ENCODE measurements at regions of chr5 and their contacts with region 1.

Region 1: GRCh38 chr5:172106511-172107356 is 81.3 kb downstream of the STK10 start:
- DNase-seq: peak in 1 of 2 donors; percentile 90
- ATAC-seq: no peak
- H3K4me3 ChIP-seq: no peak overlapping the region
- H3K27ac ChIP-seq: no peak overlapping the region
- H3K4me1 ChIP-seq: no peaks in the 10 kb centered on the region
- H3K27me3 ChIP-seq: no peaks in the 10 kb centered on the region

Region 2: DNA sequence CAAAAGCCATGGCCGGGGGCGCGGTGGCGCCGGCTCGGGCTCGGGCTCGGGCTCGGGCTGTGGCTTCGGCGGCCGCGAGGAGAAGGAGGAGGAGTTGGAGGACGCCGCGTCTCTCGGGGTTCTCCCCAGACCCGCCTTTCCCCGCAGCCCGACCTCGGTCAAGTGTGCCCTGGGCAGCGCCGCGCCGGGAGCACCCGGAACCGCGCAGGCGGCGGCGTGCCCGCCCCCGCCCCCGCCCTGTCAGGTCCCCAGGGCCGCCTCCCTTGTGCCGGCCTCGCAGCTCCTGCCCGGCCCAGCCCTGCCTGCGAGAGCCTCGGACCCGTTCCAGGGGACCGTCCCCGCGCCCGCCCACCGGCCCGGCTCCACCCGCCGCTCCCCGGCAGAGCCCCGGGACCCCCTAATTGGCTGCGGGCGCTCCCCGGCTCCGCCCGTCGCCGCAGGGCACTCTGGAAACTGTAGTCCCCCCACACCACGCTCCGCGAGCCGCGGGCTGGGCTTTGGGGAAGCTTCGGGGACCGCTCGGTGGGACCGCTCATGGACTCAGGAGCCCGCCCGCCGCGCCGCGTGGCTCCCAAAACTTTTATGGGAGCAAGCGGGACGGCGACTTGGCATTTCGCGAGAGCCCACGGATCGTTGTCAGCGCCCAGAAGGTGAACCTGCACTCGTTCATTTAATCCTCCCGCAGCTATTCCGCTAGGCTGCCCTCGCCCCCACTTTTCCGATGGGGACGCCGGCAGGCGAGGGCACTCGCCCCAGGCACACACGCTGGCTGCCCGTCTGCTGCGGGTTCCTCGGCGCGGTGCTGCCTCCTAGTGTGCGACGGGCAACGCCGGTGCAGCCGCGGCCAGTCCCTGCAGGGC is 81.5 kb after region 1 on chr5 and contains the start of gene STK10:
- intact Hi-C with region 1: loop called (anchors 2 to 5 kb)
- DNase-seq: peak; percentile 97 to 98
- ATAC-seq: peak; percentile 97
- H3K4me3 ChIP-seq: peak within 1 kb of the TSS; percentile 43 to 64
- H3K27ac ChIP-seq: peak within 1 kb of the TSS in 1 of 2 donors; percentile 14
- H3K4me1 ChIP-seq: no peaks in the 10 kb centered on the region
- H3K27me3 ChIP-seq: no peaks in the 10 kb centered on the region
- total RNA-seq, gene STK10: 32.5 to 67.7 TPM

Region 3: DNA sequence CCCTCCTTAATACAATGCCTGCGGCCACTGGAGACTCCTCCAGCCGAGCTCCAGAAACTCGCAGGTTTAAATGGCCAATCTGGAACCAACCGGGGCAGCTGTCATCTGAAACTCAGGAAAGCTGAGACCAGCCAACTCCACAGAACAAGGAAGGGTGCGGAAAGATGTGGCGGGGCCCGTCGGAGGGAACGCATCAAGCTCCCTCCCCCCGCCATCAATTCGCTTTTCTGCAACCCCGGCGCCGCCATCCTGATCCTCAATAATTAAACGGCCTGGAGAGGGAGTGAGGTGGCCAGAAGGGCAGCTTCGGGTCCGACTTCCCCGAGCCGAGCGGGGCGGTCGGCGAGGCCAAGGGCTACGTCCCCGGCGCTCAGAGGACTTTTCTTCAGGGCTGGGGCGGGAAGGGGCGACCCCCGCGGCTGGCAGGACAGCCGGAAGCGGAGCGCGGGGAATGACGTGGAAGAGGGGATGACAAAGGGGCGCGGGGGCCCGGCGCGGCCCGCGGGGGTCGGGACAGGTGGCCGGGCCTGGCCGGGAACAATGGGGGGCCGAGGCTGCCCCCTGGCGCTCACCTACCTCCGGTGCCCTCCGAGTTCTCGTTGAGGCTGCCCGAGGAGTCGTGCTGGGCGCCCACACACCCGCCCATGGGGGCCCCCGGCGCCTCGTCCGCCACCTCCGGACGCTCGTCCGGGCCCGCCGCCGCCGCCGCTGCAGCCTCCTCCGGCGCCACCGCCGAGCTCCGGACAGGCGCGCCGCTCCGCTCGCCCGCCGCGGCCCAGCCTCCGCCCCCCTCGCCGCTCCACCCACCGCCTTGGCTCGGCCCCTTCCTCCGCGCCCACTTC is 176.5 kb after region 1 on chr5 and contains the start of gene UBTD2:
- intact Hi-C with region 1: loop called in 1 of 2 experiments (anchors 5 kb)
- DNase-seq: peak; percentile 92 to 94
- ATAC-seq: peak; percentile 89
- H3K4me3 ChIP-seq: peak within 1 kb of the TSS; percentile 91 to 93
- H3K27ac ChIP-seq: peak within 1 kb of the TSS; percentile 72 to 93
- H3K4me1 ChIP-seq: no peaks in the 10 kb centered on the region
- H3K27me3 ChIP-seq: no peaks in the 10 kb centered on the region
- total RNA-seq, gene UBTD2: 17.0 to 21.1 TPM

Region 4: DNA sequence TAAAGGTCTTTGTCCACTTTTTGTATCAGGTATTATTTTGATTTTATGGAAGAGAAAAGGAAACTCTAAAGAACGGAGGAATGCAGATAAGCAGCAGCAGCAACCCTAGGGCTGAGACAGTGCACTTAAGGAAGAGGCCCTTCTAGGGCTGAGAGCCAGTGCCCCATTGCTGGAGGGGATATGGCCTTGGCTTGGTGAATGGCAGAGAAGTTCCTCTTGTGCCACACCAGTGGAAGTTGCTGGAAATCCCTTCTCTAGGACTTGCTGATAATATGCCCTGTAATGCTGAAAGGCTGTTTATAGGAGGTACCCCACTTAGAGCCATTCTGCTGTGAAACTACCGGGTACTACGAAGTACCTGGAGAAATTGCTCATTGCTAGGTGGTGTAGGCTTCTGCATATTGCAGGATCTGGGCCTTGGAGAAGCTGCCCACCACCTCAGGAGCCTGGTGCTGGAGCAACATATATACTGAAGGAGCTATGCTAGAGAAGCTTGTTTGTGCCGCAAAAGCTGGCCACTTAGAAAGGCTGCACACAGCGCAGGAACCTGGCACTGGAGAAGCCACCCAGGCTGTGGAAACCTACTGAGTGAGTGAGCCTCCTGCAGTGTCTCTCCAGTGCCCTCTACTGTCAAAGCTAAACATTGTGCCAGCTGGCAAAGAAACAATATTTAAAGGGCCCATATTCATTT is 186.5 kb after region 1 on chr5:
- intact Hi-C with region 1: loop called in 1 of 2 experiments (anchors 5 kb)
- DNase-seq: peak in 1 of 2 donors; percentile 72
- ATAC-seq: peak; percentile 85
- H3K4me3 ChIP-seq: no peak overlapping the region
- H3K27ac ChIP-seq: no peak overlapping the region
- H3K4me1 ChIP-seq: no peaks in the 10 kb centered on the region
- H3K27me3 ChIP-seq: peaks cover 0 to 2% of the 10 kb centered on the region in 2 donors

Region 5: GRCh38 chr5:172370648-172371545 is 264.2 kb after region 1 on chr5:
- intact Hi-C with region 1: loop called in 1 of 2 experiments (anchors 5 kb)
- DNase-seq: no peak
- ATAC-seq: peak; percentile 38
- H3K4me3 ChIP-seq: no peak overlapping the region
- H3K27ac ChIP-seq: no peak overlapping the region
- H3K4me1 ChIP-seq: no peaks in the 10 kb centered on the region
- H3K27me3 ChIP-seq: no peaks in the 10 kb centered on the region

Measured in aorta (tissue), 5 donors.